Psoas muscle (tissue), 8 donors: ENCODE measurements at regions of chrX and their contacts with region 1.

Region 1: GRCh38 chrX:77910108-77910840 is at the start of gene ATP7A:
- DNase-seq: peak; percentile 89 to 94
- ATAC-seq: peak; percentile 96 to 98 (median 97)
- H3K4me3 ChIP-seq: peak within 1 kb of the TSS; percentile 69
- H3K27ac ChIP-seq: peak within 1 kb of the TSS; percentile 77
- H3K4me1 ChIP-seq: peaks cover 10% of the 10 kb centered on the region
- H3K27me3 ChIP-seq: no peaks in the 10 kb centered on the region
- CTCF ChIP-seq: peak; percentile 43
- total RNA-seq, gene ATP7A: 3.4 to 6.0 (median 4.6) TPM

Region 2: GRCh38 chrX:78029663-78030062 is 119.4 kb after region 1 on chrX:
- intact Hi-C with region 1: loop called (anchors 10 kb)
- DNase-seq: no peak
- ATAC-seq: no peak
- H3K4me3 ChIP-seq: no peak overlapping the region
- H3K27ac ChIP-seq: no peak overlapping the region
- H3K4me1 ChIP-seq: no peaks in the 10 kb centered on the region
- H3K27me3 ChIP-seq: no peaks in the 10 kb centered on the region
- CTCF ChIP-seq: peak; percentile 37

Region 3: DNA sequence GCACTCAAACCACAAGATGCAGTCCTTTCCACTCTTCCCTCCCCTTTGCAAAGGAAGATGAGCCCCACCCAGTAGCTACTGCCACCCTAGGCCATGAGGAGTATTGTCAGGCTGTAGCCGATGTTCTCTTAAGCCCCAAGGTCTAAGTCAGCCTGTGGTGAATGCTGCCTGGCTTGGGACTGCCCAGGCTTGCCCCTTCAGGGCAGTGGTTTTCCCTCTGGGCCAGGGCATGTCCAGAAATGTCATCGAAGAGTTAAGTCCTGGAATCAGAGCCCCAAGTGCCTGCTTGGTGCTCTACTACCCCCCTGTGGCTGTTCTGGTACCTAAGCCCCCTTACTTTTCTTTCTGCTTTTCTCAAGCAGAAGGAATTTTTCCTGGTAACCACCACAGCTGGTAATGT is 182.0 kb after region 1 on chrX:
- intact Hi-C with region 1: loop called in 1 of 2 experiments (anchors 10 kb)
- DNase-seq: no peak
- ATAC-seq: peak in 2 of 4 donors; percentile 27 to 36
- H3K4me3 ChIP-seq: no peak overlapping the region
- H3K27ac ChIP-seq: no peak overlapping the region
- H3K4me1 ChIP-seq: no peaks in the 10 kb centered on the region
- H3K27me3 ChIP-seq: peaks cover 0 to 5% (median 0%) of the 10 kb centered on the region in 3 donors
- CTCF ChIP-seq: peak; percentile 18

Region 4: GRCh38 chrX:78346826-78347225 is 436.6 kb after region 1 on chrX:
- intact Hi-C with region 1: no loop called
- DNase-seq: no peak
- ATAC-seq: no peak
- H3K4me3 ChIP-seq: no peak overlapping the region
- H3K27ac ChIP-seq: no peak overlapping the region
- H3K4me1 ChIP-seq: no peaks in the 10 kb centered on the region
- H3K27me3 ChIP-seq: no peaks in the 10 kb centered on the region
- CTCF ChIP-seq: no peak